ENCODE measurements at regions of chr12 and their contacts with region 1.

Region 1: DNA sequence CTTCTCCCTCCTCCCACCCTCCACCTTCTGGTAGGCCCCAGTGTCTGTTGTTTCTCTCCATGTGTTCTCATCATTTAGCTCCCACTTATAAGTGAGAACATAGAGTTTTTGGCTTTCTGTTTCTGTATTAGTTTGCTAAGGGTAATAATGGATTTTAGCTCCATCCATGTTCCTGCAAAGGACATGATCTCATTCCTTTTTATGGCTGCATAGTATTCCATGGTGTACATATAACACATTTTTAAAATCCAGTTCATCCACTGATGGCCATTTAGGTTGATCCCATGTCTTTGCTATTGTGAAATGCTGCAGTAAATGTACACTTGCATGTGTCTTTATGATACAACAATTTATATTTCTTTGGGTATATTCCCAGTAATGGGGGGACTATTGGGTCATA is 96.1 kb downstream of the CCDC91 start:
- DNase-seq: no peak
- H3K4me3 ChIP-seq: no peak overlapping the region
- H3K27ac ChIP-seq: no peak overlapping the region
- H3K4me1 ChIP-seq: no peaks in the 10 kb centered on the region
- CTCF ChIP-seq: no peak

Region 2: DNA sequence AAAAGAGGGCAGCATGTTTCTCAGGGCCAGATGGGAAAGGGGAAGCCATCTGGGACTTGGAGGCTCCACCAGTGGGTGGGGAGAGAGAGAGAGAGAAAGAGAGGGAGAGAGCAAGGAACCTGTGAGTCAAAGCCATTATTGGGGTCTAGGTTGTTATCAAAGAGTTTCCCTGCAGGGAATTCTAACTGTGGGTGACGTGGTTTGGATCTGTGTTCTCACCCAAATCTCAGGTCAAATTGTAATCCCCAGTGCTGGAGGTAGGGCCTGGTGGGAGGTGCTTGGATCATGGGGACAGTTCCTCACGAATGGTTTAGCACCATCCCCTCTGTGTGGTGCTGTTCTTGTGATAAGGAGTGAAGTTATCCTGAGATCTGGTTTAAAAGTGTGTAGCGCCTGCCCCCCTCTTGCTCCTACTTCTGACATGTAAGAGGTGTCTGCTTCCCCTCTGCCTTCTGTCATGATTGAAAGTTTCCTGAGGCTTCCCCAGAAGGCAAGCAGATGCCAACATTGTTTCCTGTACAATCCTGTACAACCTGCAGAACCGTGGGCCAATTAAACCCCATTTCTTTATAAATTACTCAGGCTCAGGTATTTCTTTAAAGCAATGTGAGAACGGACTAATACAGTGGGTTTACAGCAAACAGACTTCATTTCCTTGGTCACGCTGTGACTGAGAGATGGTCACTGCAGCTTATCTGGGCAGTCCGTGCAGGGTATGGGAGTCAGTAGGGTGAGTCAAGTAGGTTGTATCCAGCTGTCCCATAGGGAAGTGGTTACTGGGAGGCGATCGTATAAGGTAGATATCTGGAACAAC is 43.6 kb before region 1 on chr12:
- CTCF ChIA-PET with region 1: no interaction called
- POLR2A ChIA-PET with region 1: no interaction called
- intact Hi-C with region 1: no loop called
- DNase-seq: no peak
- H3K4me3 ChIP-seq: no peak overlapping the region
- H3K27ac ChIP-seq: no peak overlapping the region
- H3K4me1 ChIP-seq: no peaks in the 10 kb centered on the region
- CTCF ChIP-seq: no peak

Region 3: GRCh38 chr12:28313631-28314030 is 27.3 kb after region 1 on chr12:
- CTCF ChIA-PET with region 1: no interaction called
- POLR2A ChIA-PET with region 1: no interaction called
- intact Hi-C with region 1: loop called (anchors 2 kb)
- DNase-seq: no peak
- H3K4me3 ChIP-seq: no peak overlapping the region
- H3K27ac ChIP-seq: no peak overlapping the region
- H3K4me1 ChIP-seq: no peaks in the 10 kb centered on the region
- CTCF ChIP-seq: no peak

Measured in OCI-LY7 (cell line).